ENCODE measurements at regions of chr20 and their contacts with region 1.

Region 1: DNA sequence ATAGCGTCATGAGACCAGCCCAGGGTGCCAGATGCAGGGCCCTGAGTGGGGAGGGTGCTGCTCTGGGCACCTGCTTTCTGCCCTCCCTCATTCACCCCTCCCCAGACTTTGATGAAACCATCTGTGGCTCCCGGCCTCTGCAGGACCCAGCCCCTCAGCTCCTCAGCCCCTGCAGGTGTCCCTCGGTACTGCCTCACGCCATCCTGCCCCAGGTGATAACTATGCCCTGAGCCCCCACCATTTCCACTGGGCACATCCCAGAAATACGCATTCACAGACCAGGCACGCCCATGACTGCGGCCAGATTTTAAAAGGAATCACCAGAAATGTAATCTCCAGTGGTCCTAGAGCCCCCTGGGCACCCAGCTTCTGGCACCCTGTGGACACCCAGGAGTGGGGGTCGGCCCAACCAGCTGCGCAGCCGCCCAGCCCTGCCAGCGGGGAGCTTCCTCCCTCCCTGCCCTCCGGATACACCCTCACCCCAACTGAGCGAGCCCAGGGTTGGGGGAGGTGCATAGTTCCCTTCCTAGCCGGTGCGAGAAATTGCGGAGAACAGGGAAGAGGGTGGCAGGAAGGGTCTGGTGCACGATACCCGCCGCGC is 615 bp upstream of the NTSR1 start:
- DNase-seq: peak; percentile 83
- ATAC-seq: peak; percentile 82
- H3K4me3 Mint-ChIP-seq: peak overlapping the region; percentile 77
- H3K27ac Mint-ChIP-seq: no peak overlapping the region
- H3K4me1 Mint-ChIP-seq: 0 out of 2 replicates have a peak, but pooled peaks cover 3% of the 10 kb centered on the region
- H3K27me3 Mint-ChIP-seq: peaks cover 32% of the 10 kb centered on the region
- CTCF ChIP-seq: peak; percentile 53; the same call in 1 of the 2 replicates

Region 2: GRCh38 chr20:62557445-62557844 is 150.6 kb before region 1 on chr20:
- CTCF ChIA-PET with region 1: no interaction called
- POLR2A ChIA-PET with region 1: no interaction called
- DNase-seq: no peak
- ATAC-seq: no peak
- H3K4me3 Mint-ChIP-seq: no peak overlapping the region
- H3K27ac Mint-ChIP-seq: no peak overlapping the region
- H3K4me1 Mint-ChIP-seq: 0 out of 2 replicates have a peak, but pooled peaks cover 3% of the 10 kb centered on the region
- H3K27me3 Mint-ChIP-seq: peaks cover 4% of the 10 kb centered on the region
- CTCF ChIP-seq: no peak

Region 3: DNA sequence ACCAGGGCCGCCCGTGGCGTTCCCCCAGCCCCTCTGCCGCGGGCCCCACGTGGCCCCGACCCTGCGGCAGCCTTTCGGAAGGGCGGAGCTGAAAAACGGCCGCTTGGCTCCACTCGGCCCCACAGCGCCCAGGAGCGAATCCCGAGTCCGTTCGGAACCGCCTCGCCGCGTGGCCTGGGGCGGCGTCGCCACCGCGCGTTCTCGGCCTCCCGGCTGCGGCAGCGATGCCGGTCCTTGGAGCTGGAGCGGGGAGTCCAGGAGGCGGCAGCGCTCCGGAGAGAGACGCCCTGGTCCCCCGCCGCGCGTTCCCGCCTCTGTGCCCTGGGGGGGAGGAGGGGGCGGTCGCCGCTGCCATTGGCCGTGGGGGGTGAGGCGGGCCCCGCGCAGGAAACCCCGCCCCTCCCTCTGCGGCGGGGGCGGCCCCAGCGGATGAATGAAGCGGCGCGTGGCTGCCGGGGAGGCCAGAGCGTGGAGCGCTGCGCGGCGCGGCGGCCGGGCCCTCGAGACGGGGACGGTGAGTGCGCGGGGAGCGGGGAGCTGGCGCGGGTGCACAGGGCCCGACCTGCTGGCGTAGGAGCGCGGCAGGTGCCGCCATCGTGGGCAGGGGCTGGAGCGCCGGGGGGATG is 65.9 kb before region 1 on chr20 and contains the start of gene SLCO4A1:
- CTCF ChIA-PET with region 1: interaction called, 14 read pairs
- POLR2A ChIA-PET with region 1: no interaction called
- DNase-seq: peak; percentile 73
- ATAC-seq: peak; percentile 76
- H3K4me3 Mint-ChIP-seq: peak within 1 kb of the TSS; percentile 65
- H3K27ac Mint-ChIP-seq: no peak within 1 kb of the TSS
- H3K4me1 Mint-ChIP-seq: peaks cover 13% of the 10 kb centered on the region
- H3K27me3 Mint-ChIP-seq: peaks cover 41% of the 10 kb centered on the region
- CTCF ChIP-seq: no peak
- total RNA-seq, gene SLCO4A1: 15.2 to 19.9 TPM (median 18.5 TPM) in 3 replicates

Region 4: GRCh38 chr20:62697468-62697912 is 10.5 kb before region 1 on chr20:
- CTCF ChIA-PET with region 1: interaction called, 22 read pairs
- POLR2A ChIA-PET with region 1: no interaction called
- DNase-seq: no peak
- ATAC-seq: no peak
- H3K4me3 Mint-ChIP-seq: no peak overlapping the region
- H3K27ac Mint-ChIP-seq: peak overlapping the region; percentile 19; the same call in 1 of the 2 replicates
- H3K4me1 Mint-ChIP-seq: no peaks in the 10 kb centered on the region
- H3K27me3 Mint-ChIP-seq: peaks cover under 1% of the 10 kb centered on the region; the same call in 1 of the 2 replicates
- CTCF ChIP-seq: no peak

Region 5: DNA sequence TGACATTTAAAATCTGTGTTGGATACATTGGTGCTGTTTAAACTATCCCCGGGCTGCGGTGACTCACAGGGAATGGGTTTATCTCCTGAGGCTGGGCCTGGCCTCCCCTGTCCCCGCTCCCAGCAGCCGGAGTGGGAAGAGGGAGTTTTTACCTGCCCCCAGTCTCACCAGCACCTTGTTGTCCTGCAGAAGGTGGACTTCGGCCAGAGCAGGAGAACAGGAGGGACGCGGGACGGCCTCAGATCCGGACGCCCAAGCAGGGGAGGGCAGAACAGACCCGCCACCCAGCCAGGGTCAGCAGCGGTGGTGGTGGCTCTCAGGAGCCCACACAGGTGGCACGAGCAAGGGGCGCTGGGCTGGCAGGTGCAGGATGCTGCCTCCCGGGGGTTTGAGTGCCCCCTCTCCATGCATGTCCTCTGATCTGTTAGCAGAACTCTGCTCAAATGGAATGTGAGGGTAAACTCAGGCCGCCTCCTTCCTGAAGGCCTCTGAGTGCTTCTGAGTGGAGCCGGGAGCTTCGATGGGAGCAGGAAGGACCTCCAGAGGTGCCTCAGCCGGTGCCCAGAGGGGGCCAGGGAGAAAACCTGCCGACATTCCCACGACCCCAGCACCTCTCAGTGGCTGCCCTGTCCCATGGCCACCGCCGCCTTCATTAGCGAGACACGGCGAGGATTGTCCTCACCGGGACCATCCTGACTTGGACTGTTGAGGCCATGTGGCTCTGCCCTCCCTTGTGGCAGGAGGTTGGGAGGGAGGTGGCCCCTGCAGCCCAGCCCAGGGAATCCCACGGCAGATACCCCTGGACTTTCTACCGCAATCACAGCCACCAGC is 44.9 kb after region 1 on chr20:
- CTCF ChIA-PET with region 1: interaction called, 16 read pairs
- POLR2A ChIA-PET with region 1: no interaction called
- DNase-seq: no peak
- ATAC-seq: peak; percentile 35
- H3K4me3 Mint-ChIP-seq: no peak overlapping the region
- H3K27ac Mint-ChIP-seq: no peak overlapping the region
- H3K4me1 Mint-ChIP-seq: 0 out of 2 replicates have a peak, but pooled peaks cover 3% of the 10 kb centered on the region
- H3K27me3 Mint-ChIP-seq: peaks cover 9% of the 10 kb centered on the region
- CTCF ChIP-seq: no peak

Region 6: GRCh38 chr20:62787321-62787720 is 79.3 kb after region 1 on chr20:
- CTCF ChIA-PET with region 1: interaction called, 38 read pairs
- POLR2A ChIA-PET with region 1: no interaction called
- DNase-seq: no peak
- ATAC-seq: no peak
- H3K4me3 Mint-ChIP-seq: no peak overlapping the region
- H3K27ac Mint-ChIP-seq: no peak overlapping the region
- H3K4me1 Mint-ChIP-seq: peaks cover 13% of the 10 kb centered on the region
- H3K27me3 Mint-ChIP-seq: peaks cover 3% of the 10 kb centered on the region; the same call in 1 of the 2 replicates
- CTCF ChIP-seq: no peak

Measured in WTC11 (cell line).